WTC11 (cell line): ENCODE measurements at regions of chr11 and their contacts with region 1.

Region 1: DNA sequence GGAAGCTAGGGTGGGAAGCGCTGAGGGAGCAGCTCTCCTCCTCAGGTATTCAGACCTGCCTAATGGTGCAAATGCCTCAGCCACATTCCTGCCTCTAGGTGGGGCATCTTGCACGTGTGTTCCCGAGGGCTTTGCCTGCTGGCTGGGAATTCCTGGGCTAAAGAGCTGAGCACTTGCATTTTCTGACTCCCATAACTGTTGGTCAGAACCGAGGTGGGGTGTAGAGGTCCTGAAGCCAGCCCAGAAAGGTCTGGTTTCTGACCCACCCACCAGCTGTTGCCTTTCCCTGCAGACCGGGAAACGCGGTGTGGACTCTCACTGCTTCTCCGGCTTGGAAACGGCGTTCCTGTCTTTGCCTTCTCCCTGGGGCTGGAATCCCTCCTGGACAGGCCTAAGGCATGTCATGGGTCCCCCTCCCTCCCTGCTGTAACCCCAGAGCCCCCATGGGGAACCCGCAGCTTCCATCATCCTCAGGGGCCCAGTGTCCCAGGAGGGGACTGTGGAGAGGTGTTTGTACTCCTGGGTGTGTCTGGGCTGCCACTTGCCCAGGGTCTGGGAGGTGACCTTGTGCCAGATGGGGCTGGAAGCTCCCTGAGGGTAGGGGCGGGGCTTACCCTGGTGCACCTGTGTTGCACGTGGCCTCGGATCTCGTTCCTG is 24.0 kb upstream of the SMIM38 start:
- DNase-seq: peak; percentile 92
- ATAC-seq: peak; percentile 94
- H3K4me3 Mint-ChIP-seq: no peak overlapping the region
- H3K27ac Mint-ChIP-seq: no peak overlapping the region
- H3K4me1 Mint-ChIP-seq: peaks cover 10% of the 10 kb centered on the region
- H3K27me3 Mint-ChIP-seq: peaks cover 8% of the 10 kb centered on the region; the same call in 1 of the 2 replicates
- CTCF ChIP-seq: peak; percentile 92

Region 2: DNA sequence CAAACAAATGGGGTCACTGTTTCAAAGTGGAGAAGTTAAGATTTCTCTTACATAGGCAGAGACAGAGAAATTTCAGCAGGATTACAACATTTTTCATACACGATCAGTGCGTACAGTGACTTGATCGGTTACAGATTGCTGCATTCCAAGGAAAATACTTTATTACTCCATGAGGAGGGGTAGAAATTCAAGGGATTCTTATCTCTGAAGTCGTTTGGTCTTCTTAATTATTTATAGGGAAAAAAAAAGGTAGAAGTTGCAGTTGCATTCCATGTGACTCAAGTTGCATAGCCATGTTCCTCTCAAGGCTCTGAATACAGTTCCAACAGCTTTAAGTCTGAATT is 13.3 kb after region 1 on chr11:
- CTCF ChIA-PET with region 1: interaction called, 22 read pairs
- POLR2A ChIA-PET with region 1: no interaction called
- DNase-seq: no peak
- ATAC-seq: no peak
- H3K4me3 Mint-ChIP-seq: no peak overlapping the region
- H3K27ac Mint-ChIP-seq: no peak overlapping the region
- H3K4me1 Mint-ChIP-seq: 0 out of 2 replicates have a peak, but pooled peaks cover 7% of the 10 kb centered on the region
- H3K27me3 Mint-ChIP-seq: peaks cover 3% of the 10 kb centered on the region
- CTCF ChIP-seq: no peak

Region 3: GRCh38 chr11:69183613-69184012 is 51.8 kb after region 1 on chr11:
- CTCF ChIA-PET with region 1: interaction called, 11 read pairs
- POLR2A ChIA-PET with region 1: no interaction called
- DNase-seq: no peak
- ATAC-seq: no peak
- H3K4me3 Mint-ChIP-seq: no peak overlapping the region
- H3K27ac Mint-ChIP-seq: no peak overlapping the region
- H3K4me1 Mint-ChIP-seq: no peaks in the 10 kb centered on the region
- H3K27me3 Mint-ChIP-seq: no peaks in the 10 kb centered on the region
- CTCF ChIP-seq: no peak

Region 4: GRCh38 chr11:69211920-69212571 is 80.3 kb after region 1 on chr11:
- CTCF ChIA-PET with region 1: interaction called, 13 read pairs
- POLR2A ChIA-PET with region 1: no interaction called
- DNase-seq: peak; percentile 13
- ATAC-seq: peak; percentile 20; the same call in 1 of the 2 replicates
- H3K4me3 Mint-ChIP-seq: no peak overlapping the region
- H3K27ac Mint-ChIP-seq: no peak overlapping the region
- H3K4me1 Mint-ChIP-seq: peaks cover 6% of the 10 kb centered on the region; the same call in 1 of the 2 replicates
- H3K27me3 Mint-ChIP-seq: peaks cover 3% of the 10 kb centered on the region; the same call in 1 of the 2 replicates
- CTCF ChIP-seq: no peak

Region 5: DNA sequence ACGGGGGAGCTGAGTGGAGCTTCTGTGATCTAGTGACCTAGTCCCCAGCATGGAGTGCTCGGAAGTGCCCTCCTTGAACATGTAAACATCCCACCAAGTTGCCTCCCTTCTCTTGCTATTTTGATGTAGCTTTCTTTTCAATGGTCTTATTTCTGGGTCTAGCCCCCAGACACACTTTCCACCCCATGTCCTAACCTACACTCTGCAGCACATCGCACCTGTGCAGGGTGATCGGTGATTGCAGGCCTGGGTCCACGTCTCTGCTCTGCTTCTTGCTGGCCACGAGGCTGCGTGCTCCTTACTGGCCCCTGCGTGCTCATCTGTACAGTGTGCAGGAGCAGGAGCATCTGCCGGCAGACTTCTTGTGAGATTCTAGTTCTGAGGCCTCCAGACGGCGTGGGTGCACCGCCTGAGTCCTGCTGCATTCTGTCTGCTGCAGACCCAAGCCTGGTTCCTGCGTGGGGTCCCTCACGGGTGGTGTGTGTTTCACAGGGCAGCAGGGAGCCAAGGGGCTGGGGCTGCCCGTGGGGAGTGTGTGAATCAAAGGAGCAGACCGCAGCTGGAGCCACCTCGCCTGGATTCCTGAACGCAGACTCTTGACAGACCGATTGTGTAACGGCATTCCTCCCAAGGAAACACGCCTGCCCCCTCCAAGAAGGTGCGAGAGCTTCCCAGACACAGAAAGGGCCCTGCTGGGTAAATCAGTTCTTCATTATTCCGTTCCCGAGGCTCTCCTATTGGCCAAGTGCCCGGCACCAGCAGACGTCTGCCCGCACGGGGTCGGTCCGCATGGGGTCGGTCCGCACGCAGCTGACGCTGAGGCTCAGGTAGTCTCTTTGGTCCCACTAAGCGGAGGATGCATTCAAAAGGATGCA is 117.8 kb after region 1 on chr11:
- CTCF ChIA-PET with region 1: interaction called, 26 read pairs
- POLR2A ChIA-PET with region 1: no interaction called
- DNase-seq: peak; percentile 62
- ATAC-seq: peak; percentile 87
- H3K4me3 Mint-ChIP-seq: peak overlapping the region; percentile 32; the same call in 1 of the 2 replicates
- H3K27ac Mint-ChIP-seq: no peak overlapping the region
- H3K4me1 Mint-ChIP-seq: peaks cover 29% of the 10 kb centered on the region
- H3K27me3 Mint-ChIP-seq: peaks cover 34% of the 10 kb centered on the region
- CTCF ChIP-seq: no peak

Region 6: DNA sequence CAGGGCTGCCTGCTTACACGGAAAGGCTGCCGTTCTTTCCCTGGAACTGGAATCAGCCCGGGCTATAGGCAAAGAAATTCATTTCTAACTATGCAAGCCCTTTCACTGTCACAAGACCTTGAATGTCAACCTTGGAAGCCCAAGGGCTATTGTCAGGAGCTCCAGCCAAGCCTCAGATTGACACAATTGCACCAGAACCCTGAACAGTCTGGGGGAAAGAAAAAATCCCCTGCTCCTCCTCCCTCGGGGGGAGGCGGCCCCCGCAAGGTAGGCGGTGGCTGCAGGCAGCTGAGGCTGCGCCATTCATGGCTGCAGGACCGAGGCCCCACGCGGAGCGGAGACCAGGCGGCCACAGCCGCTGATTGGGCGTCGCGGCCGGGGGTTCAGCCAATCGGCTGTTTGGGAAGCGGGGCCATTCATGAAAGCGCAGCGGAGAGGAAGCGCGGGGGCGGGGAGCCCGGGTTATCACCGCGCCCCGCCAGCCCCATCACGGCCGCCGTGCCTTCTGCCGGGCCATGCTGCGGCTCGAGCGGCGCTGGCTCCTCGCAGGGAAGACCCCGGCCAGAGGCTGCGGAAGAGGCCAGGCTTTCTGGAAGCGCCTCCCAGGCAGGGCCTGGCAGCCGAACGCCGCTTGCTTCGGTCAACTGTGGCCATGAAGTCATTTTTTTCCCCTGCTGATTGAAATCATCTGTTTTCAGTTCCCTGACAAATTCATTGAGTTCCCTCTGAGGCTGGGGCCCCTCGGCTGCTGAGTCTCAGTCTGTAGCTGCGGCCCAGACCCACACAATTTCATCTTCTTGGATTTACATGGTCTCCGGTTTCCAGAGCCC is 311.6 kb after region 1 on chr11:
- CTCF ChIA-PET with region 1: interaction called, 13 read pairs
- POLR2A ChIA-PET with region 1: no interaction called
- DNase-seq: peak; percentile 89
- ATAC-seq: peak; percentile 75
- H3K4me3 Mint-ChIP-seq: peak overlapping the region; percentile 38
- H3K27ac Mint-ChIP-seq: peak overlapping the region; percentile 84
- H3K4me1 Mint-ChIP-seq: peaks cover 41% of the 10 kb centered on the region
- H3K27me3 Mint-ChIP-seq: peaks cover 8% of the 10 kb centered on the region
- CTCF ChIP-seq: no peak